RWPE1 (cell line): ENCODE measurements at regions of chr1 and their contacts with region 1.

Region 1: GRCh38 chr1:150995896-150996295 is 10.8 kb downstream of the MINDY1 start:
- DNase-seq: no peak
- H3K27ac ChIP-seq: no peak overlapping the region
- CTCF ChIP-seq: peak; percentile 81

Region 2: GRCh38 chr1:150909585-150910180 is 86.2 kb before region 1 on chr1:
- CTCF ChIA-PET with region 1: no interaction called
- POLR2A ChIA-PET with region 1: no interaction called
- DNase-seq: no peak
- H3K27ac ChIP-seq: no peak overlapping the region
- CTCF ChIP-seq: no peak

Region 3: DNA sequence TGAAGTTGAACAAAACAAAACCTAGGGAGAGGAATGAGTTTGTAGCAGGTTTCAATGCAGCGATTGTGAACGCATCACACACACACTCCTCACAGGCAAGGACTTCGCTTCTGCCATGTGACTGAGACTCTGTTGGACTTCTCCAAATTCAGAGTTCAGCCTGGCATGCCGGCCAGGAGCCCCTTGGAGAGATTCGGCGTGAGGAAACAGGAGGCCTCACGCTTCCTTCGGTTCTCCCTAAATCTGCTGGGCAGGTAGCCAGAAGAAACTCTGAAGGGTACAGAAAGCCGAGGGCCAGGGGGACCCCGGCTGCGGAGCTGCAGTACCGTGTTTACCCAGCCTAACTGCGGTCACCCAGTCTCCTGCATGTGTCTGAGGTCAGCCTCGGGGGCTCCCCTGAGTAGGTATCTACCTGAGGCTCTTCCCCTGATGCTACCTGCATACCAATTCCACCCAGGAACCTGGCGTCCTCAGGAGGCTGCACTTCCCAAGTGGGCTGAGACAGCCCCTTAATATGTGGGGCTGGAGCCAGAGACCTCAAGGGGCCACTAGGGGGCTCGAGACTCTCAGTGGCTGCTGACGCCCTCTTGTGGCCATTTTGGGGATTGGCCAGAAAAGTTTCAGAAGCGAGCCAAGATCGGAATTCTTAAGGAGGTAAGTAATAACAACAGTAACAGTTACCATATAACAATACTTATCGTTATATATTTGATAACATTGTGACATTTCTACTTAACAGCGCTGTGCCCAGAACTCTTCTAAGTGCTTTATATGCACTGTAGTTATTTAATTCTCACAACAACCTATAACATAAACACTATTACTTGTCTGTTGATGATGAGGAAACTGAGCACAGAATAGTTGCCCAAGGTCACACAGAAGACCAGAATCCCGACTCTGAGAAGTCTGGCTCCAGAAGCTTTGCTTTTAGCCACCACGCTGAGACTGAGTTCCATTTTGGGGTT is 16.5 kb before region 1 on chr1:
- CTCF ChIA-PET with region 1: interaction called, 23 read pairs
- POLR2A ChIA-PET with region 1: no interaction called
- DNase-seq: peak; percentile 89
- H3K27ac ChIP-seq: peak overlapping the region; percentile 91
- CTCF ChIP-seq: peak; percentile 99

Region 4: GRCh38 chr1:151006327-151007052 is 10.6 kb after region 1 on chr1 and contains the start of gene MINDY1:
- CTCF ChIA-PET with region 1: interaction called, 17 read pairs
- POLR2A ChIA-PET with region 1: interaction called, 3 read pairs
- DNase-seq: peak; percentile 84
- H3K27ac ChIP-seq: peak within 1 kb of the TSS; percentile 91
- CTCF ChIP-seq: peak; percentile 64